ENCODE measurements at regions of chr10 and their contacts with region 1.

Region 1: DNA sequence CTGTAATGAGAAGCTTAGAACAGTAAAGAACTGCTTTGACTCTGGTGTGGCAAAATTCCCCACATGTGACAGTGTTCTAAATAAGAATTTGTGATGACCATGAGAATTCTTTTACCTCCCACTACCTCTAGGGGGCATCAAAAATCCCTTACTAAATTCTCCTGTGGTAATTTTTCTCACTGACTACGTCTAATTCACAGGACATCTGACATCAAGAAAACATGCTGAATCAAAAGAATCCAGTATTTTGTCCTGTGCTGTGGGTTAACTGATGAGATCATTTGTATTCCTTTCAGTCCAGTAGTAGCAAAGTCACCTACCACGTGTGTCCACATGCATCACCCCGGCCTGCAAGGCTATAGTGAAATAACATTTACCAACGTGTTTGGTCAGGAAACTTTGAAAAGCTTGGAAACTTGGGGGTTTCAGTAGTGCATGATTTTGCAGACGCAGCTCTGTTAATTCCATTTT is 103.8 kb downstream of the ATE1 start:
- DNase-seq: peak; percentile 42 to 44
- ATAC-seq: peak; percentile 78 to 82
- H3K4me3 ChIP-seq: no peak overlapping the region
- H3K27ac ChIP-seq: no peak overlapping the region
- H3K4me1 ChIP-seq: no peaks in the 10 kb centered on the region; the same call in 2 of the 3 replicates
- CTCF ChIP-seq: peak; percentile 75
- EP300 ChIP-seq: no peak
- POLR2A ChIP-seq: no peak
- RAD21 ChIP-seq: peak; percentile 37 to 44; a peak in 4 of 5 replicates

Region 2: GRCh38 chr10:120883071-120883470 is 941.0 kb before region 1 on chr10:
- CTCF ChIA-PET with region 1: no interaction called
- POLR2A ChIA-PET with region 1: no interaction called
- DNase-seq: no peak
- ATAC-seq: no peak
- H3K4me3 ChIP-seq: no peak overlapping the region
- H3K27ac ChIP-seq: no peak overlapping the region
- H3K4me1 ChIP-seq: no peaks in the 10 kb centered on the region
- CTCF ChIP-seq: no peak
- EP300 ChIP-seq: no peak
- POLR2A ChIP-seq: no peak
- RAD21 ChIP-seq: no peak

Region 3: DNA sequence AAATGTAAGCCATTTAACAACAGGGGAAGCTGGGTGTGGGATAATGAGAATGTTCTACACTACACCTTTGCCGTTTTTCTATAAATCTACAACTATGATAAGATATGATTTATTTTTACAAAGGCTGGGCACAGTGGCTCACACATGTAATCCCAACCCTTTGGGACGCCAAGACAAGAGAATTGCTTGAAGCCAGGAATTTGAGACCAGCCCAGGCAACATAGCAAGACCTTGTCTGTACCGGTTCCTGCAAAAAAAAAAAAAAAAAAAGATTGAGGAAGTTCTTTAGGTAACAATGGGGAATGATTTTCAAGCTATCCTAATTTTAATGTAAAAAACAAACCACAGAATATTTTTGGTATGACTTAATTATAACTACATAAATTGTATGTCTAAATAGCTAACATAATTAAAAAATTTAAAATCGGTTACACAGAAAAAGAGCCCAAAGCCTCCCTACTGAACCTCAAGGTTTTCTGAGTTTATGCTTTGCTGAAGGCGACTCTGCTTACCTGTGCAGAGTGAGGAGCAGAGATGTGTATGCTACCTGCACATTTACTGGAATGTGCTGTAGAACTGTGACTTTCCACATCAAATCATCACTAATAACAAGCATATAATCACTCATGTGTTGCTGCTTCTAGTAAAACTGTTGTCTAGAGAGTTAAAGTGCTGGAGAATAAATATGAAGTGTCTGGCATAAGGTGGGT is 59.6 kb before region 1 on chr10:
- CTCF ChIA-PET with region 1: no interaction called
- POLR2A ChIA-PET with region 1: no interaction called
- DNase-seq: no peak
- ATAC-seq: no peak
- H3K4me3 ChIP-seq: no peak overlapping the region
- H3K27ac ChIP-seq: no peak overlapping the region
- H3K4me1 ChIP-seq: no peaks in the 10 kb centered on the region
- CTCF ChIP-seq: no peak
- EP300 ChIP-seq: no peak
- POLR2A ChIP-seq: no peak
- RAD21 ChIP-seq: no peak

Region 4: DNA sequence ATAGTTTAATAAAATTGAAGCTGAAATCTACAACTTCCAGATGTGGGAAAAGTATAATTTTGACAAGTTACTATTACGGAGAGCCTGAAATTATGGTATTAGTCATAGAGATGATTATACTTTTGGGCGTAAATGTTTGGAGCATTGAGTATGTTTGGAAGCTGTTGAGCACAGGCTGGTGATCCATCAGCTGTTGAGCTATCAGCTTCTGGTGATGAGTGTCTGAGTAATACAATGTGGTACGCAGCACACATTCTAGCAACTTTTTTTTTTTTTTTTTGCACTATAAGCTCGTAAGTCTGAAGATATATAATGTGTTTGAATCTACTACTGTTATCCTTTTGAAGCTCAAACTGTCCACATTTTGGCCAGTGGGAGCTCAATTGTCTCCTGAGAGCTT is 19.6 kb before region 1 on chr10:
- CTCF ChIA-PET with region 1: interaction called, 13 read pairs
- POLR2A ChIA-PET with region 1: no interaction called
- DNase-seq: no peak
- ATAC-seq: no peak
- H3K4me3 ChIP-seq: no peak overlapping the region
- H3K27ac ChIP-seq: no peak overlapping the region
- H3K4me1 ChIP-seq: no peaks in the 10 kb centered on the region
- CTCF ChIP-seq: no peak
- EP300 ChIP-seq: no peak
- POLR2A ChIP-seq: no peak
- RAD21 ChIP-seq: no peak

Region 5: DNA sequence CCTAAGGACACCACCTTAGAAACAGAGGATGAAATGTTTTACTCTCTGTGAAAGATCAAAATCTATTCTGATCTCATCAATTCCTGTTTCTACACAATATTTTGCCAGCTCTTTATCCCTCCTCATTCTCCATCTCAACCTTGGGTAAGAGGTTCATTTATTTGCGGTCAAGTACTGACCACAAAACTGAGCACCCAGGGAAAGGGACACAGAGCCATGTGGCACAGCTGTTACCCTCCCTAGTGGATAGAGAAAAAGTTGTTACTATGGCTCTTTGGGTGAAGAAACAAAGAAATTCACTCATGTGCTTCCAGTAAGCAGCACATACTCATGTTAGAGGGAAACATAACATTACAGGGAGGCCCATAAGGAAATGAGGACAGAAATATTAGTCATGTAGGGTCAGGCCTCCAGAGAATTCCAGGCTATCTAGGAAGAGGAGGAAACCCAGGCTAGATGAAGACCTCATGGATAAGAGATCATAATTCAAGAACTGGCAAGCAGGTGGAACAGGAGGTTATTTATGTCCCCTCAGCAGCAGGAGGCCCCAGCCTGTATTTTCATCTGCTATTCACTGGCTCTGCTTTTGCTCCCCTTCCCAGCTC is 10.7 kb before region 1 on chr10:
- CTCF ChIA-PET with region 1: interaction called, 10 read pairs
- POLR2A ChIA-PET with region 1: no interaction called
- DNase-seq: peak in 1 of 2 experiments; percentile 13
- ATAC-seq: peak; percentile 43 to 44; a peak in 2 of 6 replicates
- H3K4me3 ChIP-seq: no peak overlapping the region
- H3K27ac ChIP-seq: no peak overlapping the region
- H3K4me1 ChIP-seq: no peaks in the 10 kb centered on the region
- CTCF ChIP-seq: no peak
- EP300 ChIP-seq: no peak
- POLR2A ChIP-seq: no peak
- RAD21 ChIP-seq: no peak

Region 6: DNA sequence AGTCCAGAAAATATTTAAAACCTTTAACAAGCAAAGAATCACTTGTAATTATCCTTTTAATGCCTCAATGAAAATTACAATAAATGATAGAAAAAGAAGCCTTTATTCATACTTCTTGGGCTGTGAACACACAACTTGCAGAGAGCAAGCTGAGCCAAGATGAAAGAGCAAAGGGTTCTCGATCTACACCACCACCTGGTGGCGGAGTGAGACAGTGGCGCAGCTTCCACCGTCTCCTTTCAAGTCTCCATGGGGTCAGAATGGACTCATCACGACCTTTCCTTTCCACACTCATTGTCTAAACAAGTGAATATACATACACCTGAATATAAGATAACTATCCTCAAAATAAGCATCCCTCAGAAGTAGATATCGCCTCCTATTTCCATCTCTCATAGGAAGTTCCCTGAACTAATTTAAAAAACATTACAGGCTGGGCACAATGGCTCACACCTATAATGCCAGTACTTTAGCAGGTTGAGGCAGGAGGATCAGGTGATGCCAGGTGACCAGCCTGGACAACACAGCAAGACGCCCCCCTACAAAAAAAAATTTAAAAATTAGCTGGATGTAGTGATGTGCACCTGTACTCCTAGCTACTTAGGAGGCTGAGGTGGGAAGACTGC is 63.1 kb after region 1 on chr10:
- CTCF ChIA-PET with region 1: interaction called, 15 read pairs
- POLR2A ChIA-PET with region 1: no interaction called
- DNase-seq: peak; percentile 78
- ATAC-seq: peak; percentile 97 to 98
- H3K4me3 ChIP-seq: no peak overlapping the region
- H3K27ac ChIP-seq: no peak overlapping the region
- H3K4me1 ChIP-seq: peaks cover 9% of the 10 kb centered on the region; the same call in 2 of the 3 replicates
- CTCF ChIP-seq: peak; percentile 78
- EP300 ChIP-seq: no peak
- POLR2A ChIP-seq: no peak
- RAD21 ChIP-seq: peak; percentile 68 to 75

Measured in A549 (cell line).